IMR-90 (cell line): ENCODE measurements at regions of chr1 and their contacts with region 1.

Region 1: GRCh38 chr1:150789396-150789795 is 18.7 kb downstream of the CTSK start:
- DNase-seq: no peak
- ATAC-seq: no peak
- H3K4me3 ChIP-seq: no peak overlapping the region
- H3K27ac ChIP-seq: no peak overlapping the region
- H3K4me1 ChIP-seq: peaks cover 3% of the 10 kb centered on the region
- H3K27me3 ChIP-seq: no peaks in the 10 kb centered on the region
- CTCF ChIP-seq: no peak
- POLR2A ChIP-seq: no peak
- RAD21 ChIP-seq: no peak

Region 2: DNA sequence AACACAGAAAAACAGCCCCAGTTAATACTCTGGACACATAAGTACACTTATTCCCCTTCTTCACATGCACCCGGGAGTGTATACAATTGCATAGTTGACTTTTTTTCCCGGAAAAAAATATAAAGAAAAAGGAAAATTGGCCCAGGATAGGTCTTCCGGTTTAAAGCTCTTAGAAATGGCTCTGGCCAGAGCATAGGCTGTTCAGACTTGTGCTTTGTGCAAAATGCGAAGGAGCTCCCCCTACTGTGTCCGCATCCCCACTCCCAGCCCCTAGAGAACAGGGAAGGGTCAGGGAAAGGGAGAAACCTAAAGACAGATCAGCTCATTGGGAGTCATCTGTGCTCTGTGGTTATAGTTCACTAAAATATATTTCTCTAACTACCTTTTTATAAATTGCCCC is 847.2 kb before region 1 on chr1:
- CTCF ChIA-PET with region 1: no interaction called
- POLR2A ChIA-PET with region 1: no interaction called
- dilution Hi-C with region 1: no loop called
- in situ Hi-C with region 1: no loop called
- intact Hi-C with region 1: loop called (anchors 10 kb)
- DNase-seq: peak; percentile 41
- ATAC-seq: peak; percentile 60
- H3K4me3 ChIP-seq: no peak overlapping the region
- H3K27ac ChIP-seq: no peak overlapping the region
- H3K4me1 ChIP-seq: peaks cover 8% of the 10 kb centered on the region
- H3K27me3 ChIP-seq: no peaks in the 10 kb centered on the region
- CTCF ChIP-seq: peak; percentile 35
- POLR2A ChIP-seq: no peak
- RAD21 ChIP-seq: peak; percentile 27; the same call in 1 of the 2 replicates

Region 3: GRCh38 chr1:150309770-150310508 is 479.5 kb before region 1 on chr1:
- CTCF ChIA-PET with region 1: no interaction called
- POLR2A ChIA-PET with region 1: no interaction called
- dilution Hi-C with region 1: no loop called
- in situ Hi-C with region 1: no loop called
- intact Hi-C with region 1: no loop called
- DNase-seq: no peak
- ATAC-seq: no peak
- H3K4me3 ChIP-seq: no peak overlapping the region
- H3K27ac ChIP-seq: no peak overlapping the region
- H3K4me1 ChIP-seq: no peaks in the 10 kb centered on the region
- H3K27me3 ChIP-seq: no peaks in the 10 kb centered on the region
- CTCF ChIP-seq: no peak
- POLR2A ChIP-seq: no peak
- RAD21 ChIP-seq: no peak

Region 4: DNA sequence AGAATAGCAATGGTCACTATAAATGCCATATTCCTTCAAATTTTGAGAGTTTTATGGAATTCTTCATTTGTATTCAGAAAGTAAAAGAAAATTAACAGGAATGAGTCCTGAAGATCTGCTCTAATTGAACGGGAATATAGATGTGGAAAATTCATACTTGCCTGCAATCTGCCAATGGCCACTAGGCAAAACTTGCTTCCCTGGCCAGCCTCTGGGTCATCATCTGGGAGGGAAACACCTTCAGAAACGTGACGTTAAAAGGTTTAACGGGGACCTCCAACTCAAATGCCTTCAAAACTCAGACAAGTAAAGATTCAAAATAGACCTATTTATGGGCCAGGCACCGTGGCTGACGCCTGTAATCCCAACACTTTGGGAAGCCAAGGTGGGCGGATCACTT is 40.3 kb after region 1 on chr1:
- CTCF ChIA-PET with region 1: no interaction called
- POLR2A ChIA-PET with region 1: no interaction called
- dilution Hi-C with region 1: no loop called
- in situ Hi-C with region 1: no loop called
- intact Hi-C with region 1: no loop called
- DNase-seq: no peak
- ATAC-seq: no peak
- H3K4me3 ChIP-seq: no peak overlapping the region
- H3K27ac ChIP-seq: no peak overlapping the region
- H3K4me1 ChIP-seq: no peaks in the 10 kb centered on the region
- H3K27me3 ChIP-seq: no peaks in the 10 kb centered on the region
- CTCF ChIP-seq: no peak; the same call in 1 of the 2 replicates
- POLR2A ChIP-seq: no peak
- RAD21 ChIP-seq: peak; percentile 16; the same call in 1 of the 2 replicates

Region 5: DNA sequence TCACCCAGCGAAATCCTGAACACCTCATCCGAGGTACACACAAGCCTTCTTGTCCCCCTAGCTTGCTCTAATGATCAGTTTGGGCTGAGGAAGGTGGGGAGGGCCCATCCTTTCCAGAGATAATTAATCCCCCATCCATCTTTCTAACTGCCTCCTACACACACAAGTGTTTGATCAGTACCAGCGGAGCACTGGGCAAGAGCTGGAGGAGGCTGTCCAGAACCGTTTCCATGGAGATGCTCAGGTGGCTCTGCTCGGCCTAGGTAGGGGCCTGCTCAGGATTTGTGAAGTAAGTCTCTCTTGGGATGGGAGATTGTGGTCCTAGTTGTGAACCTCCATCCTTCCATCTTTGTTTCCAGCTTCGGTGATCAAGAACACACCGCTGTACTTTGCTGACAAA is 198.5 kb after region 1 on chr1:
- CTCF ChIA-PET with region 1: no interaction called
- POLR2A ChIA-PET with region 1: interaction called, 17 read pairs
- dilution Hi-C with region 1: no loop called
- in situ Hi-C with region 1: no loop called
- intact Hi-C with region 1: no loop called
- DNase-seq: no peak
- ATAC-seq: no peak
- H3K4me3 ChIP-seq: no peak overlapping the region
- H3K27ac ChIP-seq: no peak overlapping the region
- H3K4me1 ChIP-seq: no peaks in the 10 kb centered on the region
- H3K27me3 ChIP-seq: peaks cover 6% of the 10 kb centered on the region; the same call in 1 of the 2 replicates
- CTCF ChIP-seq: no peak
- POLR2A ChIP-seq: no peak
- RAD21 ChIP-seq: no peak

Region 6: GRCh38 chr1:151472856-151473731 is 683.7 kb after region 1 on chr1:
- CTCF ChIA-PET with region 1: no interaction called
- POLR2A ChIA-PET with region 1: no interaction called
- dilution Hi-C with region 1: no loop called
- in situ Hi-C with region 1: no loop called
- intact Hi-C with region 1: no loop called
- DNase-seq: peak; percentile 34
- ATAC-seq: peak; percentile 74
- H3K4me3 ChIP-seq: peak overlapping the region; percentile 38
- H3K27ac ChIP-seq: peak overlapping the region; percentile 42
- H3K4me1 ChIP-seq: no peaks in the 10 kb centered on the region
- H3K27me3 ChIP-seq: no peaks in the 10 kb centered on the region
- CTCF ChIP-seq: no peak
- POLR2A ChIP-seq: no peak
- RAD21 ChIP-seq: no peak